ENCODE measurements at regions of chr14 and their contacts with region 1.

Region 1: GRCh38 chr14:93959239-93960107 is 16.9 kb downstream of the ASB2 start:
- DNase-seq: peak; percentile 89 to 99 (median 91)
- H3K4me3 ChIP-seq: peak overlapping the region; percentile 18 to 21
- H3K4me3 Mint-ChIP-seq: peak overlapping the region; percentile 75 to 89 (median 82)
- H3K27ac ChIP-seq: peak overlapping the region; percentile 77
- H3K27ac Mint-ChIP-seq: peak overlapping the region; percentile 96 to 100 (median 99)
- H3K4me1 ChIP-seq: peaks cover 100% of the 10 kb centered on the region
- H3K4me1 Mint-ChIP-seq: peaks cover 80 to 100% (median 93%) of the 10 kb centered on the region in 4 donors
- H3K27me3 ChIP-seq: no peaks in the 10 kb centered on the region
- H3K27me3 Mint-ChIP-seq: no peaks in the 10 kb centered on the region

Region 2: GRCh38 chr14:93975791-93976476 is 16.5 kb after region 1 on chr14:
- CTCF ChIA-PET with region 1: interaction called, 1,377 read pairs
- POLR2A ChIA-PET with region 1: interaction called, 469 read pairs
- intact Hi-C with region 1: loop called (anchors 1 kb)
- DNase-seq: peak in 2 of 5 donors; percentile 17 to 40
- H3K4me3 ChIP-seq: peak overlapping the region; percentile 30 to 53
- H3K4me3 Mint-ChIP-seq: peak overlapping the region; percentile 58 to 84 (median 76)
- H3K27ac ChIP-seq: peak overlapping the region; percentile 10
- H3K27ac Mint-ChIP-seq: peak overlapping the region in 6 of 7 donors; percentile 5 to 96 (median 56)
- H3K4me1 ChIP-seq: peaks cover 79% of the 10 kb centered on the region
- H3K4me1 Mint-ChIP-seq: peaks cover 52 to 80% (median 66%) of the 10 kb centered on the region in 4 donors
- H3K27me3 ChIP-seq: no peaks in the 10 kb centered on the region
- H3K27me3 Mint-ChIP-seq: no peaks in the 10 kb centered on the region